HepG2 (cell line): ENCODE measurements at regions of chr11 and their contacts with region 1.

Region 1: DNA sequence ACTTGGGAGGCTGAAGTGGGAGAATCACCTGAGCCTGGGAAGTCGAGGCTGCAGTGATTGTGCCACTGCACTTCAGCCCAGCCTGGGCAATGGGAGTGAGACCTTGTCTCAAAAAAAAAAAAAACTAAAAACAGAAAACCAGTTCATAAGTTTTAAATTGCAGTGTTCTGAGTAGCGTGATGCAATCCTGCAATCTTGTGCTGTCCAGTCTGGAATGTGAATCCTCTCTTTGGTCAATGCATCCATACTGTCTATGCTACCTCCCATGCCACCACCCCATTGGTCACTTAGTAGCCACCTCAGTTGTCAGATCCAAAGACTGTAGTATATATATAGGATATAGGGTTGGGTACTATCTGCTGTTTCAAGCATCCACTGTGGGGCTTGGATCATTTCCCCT is 11.1 kb downstream of the YAP1 start:
- DNase-seq: no peak
- ATAC-seq: peak; percentile 27; the same call in 2 of the 3 replicates
- H3K4me3 ChIP-seq: no peak overlapping the region
- H3K27ac ChIP-seq: no peak overlapping the region
- H3K4me1 ChIP-seq: peaks cover 58% of the 10 kb centered on the region
- H3K27me3 ChIP-seq: no peaks in the 10 kb centered on the region
- CTCF ChIP-seq: no peak
- EP300 ChIP-seq: no peak
- POLR2A ChIP-seq: no peak
- RAD21 ChIP-seq: no peak

Region 2: DNA sequence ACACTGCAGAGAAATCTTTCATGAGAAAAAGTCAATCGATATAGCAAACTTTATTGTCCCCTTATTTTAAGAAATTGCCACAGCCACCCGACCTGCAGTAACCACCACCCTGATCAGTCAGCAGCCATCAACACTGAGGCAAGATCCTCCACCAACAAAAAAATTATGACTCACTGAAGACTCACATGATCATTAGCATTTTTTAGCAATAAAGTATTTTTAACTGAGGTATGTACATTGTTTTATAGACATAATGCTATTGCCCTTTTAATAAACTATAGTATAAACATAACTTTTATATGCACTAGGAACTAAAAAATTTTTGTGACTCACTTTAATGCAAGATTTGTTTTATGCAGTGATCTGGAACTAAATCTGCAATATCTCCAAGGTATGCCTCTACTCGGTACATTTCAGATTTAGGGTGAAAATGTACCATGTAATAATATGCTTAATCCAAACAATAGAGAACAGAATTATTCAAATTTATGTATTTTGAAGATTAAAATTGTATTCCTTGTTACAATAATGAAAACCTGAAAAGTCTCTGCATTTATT is 285.7 kb before region 1 on chr11:
- CTCF ChIA-PET with region 1: no interaction called
- POLR2A ChIA-PET with region 1: no interaction called
- in situ Hi-C with region 1: no loop called
- intact Hi-C with region 1: no loop called
- DNase-seq: no peak
- ATAC-seq: no peak
- H3K4me3 ChIP-seq: no peak overlapping the region
- H3K27ac ChIP-seq: no peak overlapping the region
- H3K4me1 ChIP-seq: no peaks in the 10 kb centered on the region
- H3K27me3 ChIP-seq: no peaks in the 10 kb centered on the region
- CTCF ChIP-seq: no peak
- EP300 ChIP-seq: no peak
- POLR2A ChIP-seq: no peak
- RAD21 ChIP-seq: no peak

Region 3: GRCh38 chr11:102085864-102086551 is 35.3 kb before region 1 on chr11:
- CTCF ChIA-PET with region 1: no interaction called
- POLR2A ChIA-PET with region 1: interaction called, 9 read pairs
- in situ Hi-C with region 1: no loop called
- intact Hi-C with region 1: loop called (anchors 1 kb)
- DNase-seq: peak; percentile 94
- ATAC-seq: peak; percentile 99
- H3K4me3 ChIP-seq: peak overlapping the region in 2 of 3 experiments; percentile 25 to 37; a peak in 2 of 6 replicates
- H3K27ac ChIP-seq: peak overlapping the region; percentile 48
- H3K4me1 ChIP-seq: peaks cover 26% of the 10 kb centered on the region
- H3K27me3 ChIP-seq: no peaks in the 10 kb centered on the region
- CTCF ChIP-seq: no peak
- EP300 ChIP-seq: peak in 1 of 2 experiments; percentile 82; a peak in 2 of 4 replicates
- POLR2A ChIP-seq: no peak
- RAD21 ChIP-seq: no peak

Region 4: DNA sequence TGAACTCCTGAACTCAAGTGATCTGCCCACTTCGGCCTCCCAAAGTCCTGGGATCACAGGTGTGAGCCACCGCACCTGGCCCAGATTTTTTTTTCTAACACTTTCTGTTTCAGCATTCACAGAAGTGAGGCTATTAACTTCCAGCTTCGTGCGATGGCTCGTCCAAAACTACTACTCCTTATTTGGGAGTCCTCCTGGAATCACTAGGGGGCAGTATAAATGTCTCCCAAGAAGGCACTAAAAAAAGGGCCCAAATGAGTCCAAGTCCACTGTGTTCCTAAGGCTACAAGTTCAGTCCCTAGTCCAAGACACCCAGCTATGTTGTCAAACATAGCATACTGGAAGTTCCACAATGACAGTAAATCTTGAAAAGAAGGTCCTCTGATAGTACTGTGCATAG is 132.7 kb after region 1 on chr11:
- CTCF ChIA-PET with region 1: no interaction called
- POLR2A ChIA-PET with region 1: no interaction called
- in situ Hi-C with region 1: no loop called
- intact Hi-C with region 1: no loop called
- DNase-seq: no peak
- ATAC-seq: no peak
- H3K4me3 ChIP-seq: no peak overlapping the region
- H3K27ac ChIP-seq: no peak overlapping the region
- H3K4me1 ChIP-seq: peaks cover 16% of the 10 kb centered on the region
- H3K27me3 ChIP-seq: no peaks in the 10 kb centered on the region
- CTCF ChIP-seq: peak; percentile 28
- EP300 ChIP-seq: no peak
- POLR2A ChIP-seq: no peak
- RAD21 ChIP-seq: no peak